ENCODE measurements at regions of chr19 and their contacts with region 1.

Region 1: GRCh38 chr19:52139252-52140031 is at the start of gene ZNF616:
- DNase-seq: peak; percentile 99
- H3K4me3 ChIP-seq: peak within 1 kb of the TSS; percentile 79 to 92 (median 86)
- H3K27ac ChIP-seq: peak within 1 kb of the TSS; percentile 94 to 97 (median 96)
- H3K4me1 ChIP-seq: peaks cover 0 to 19% (median 16%) of the 10 kb centered on the region in 4 donors
- H3K27me3 ChIP-seq: no peaks in the 10 kb centered on the region
- CTCF ChIP-seq: peak; percentile 83 to 92 (median 85)
- EP300 ChIP-seq: no peak
- POLR2A ChIP-seq: peak; percentile 61 to 83
- total RNA-seq, gene ZNF616: 4.3 to 7.2 (median 5.4) TPM

Region 2: GRCh38 chr19:52171321-52172169 is 32.1 kb after region 1 on chr19 and contains the start of gene ZNF836:
- intact Hi-C with region 1: loop called (anchors 2 kb)
- DNase-seq: peak; percentile 96
- H3K4me3 ChIP-seq: peak within 1 kb of the TSS; percentile 78 to 90 (median 88)
- H3K27ac ChIP-seq: peak within 1 kb of the TSS; percentile 87 to 90 (median 88)
- H3K4me1 ChIP-seq: peaks cover 0 to 21% (median 12%) of the 10 kb centered on the region in 4 donors
- H3K27me3 ChIP-seq: no peaks in the 10 kb centered on the region
- CTCF ChIP-seq: no peak
- EP300 ChIP-seq: no peak
- POLR2A ChIP-seq: no peak
- total RNA-seq, gene ZNF836: 9.1 to 12.3 (median 9.9) TPM

Region 3: DNA sequence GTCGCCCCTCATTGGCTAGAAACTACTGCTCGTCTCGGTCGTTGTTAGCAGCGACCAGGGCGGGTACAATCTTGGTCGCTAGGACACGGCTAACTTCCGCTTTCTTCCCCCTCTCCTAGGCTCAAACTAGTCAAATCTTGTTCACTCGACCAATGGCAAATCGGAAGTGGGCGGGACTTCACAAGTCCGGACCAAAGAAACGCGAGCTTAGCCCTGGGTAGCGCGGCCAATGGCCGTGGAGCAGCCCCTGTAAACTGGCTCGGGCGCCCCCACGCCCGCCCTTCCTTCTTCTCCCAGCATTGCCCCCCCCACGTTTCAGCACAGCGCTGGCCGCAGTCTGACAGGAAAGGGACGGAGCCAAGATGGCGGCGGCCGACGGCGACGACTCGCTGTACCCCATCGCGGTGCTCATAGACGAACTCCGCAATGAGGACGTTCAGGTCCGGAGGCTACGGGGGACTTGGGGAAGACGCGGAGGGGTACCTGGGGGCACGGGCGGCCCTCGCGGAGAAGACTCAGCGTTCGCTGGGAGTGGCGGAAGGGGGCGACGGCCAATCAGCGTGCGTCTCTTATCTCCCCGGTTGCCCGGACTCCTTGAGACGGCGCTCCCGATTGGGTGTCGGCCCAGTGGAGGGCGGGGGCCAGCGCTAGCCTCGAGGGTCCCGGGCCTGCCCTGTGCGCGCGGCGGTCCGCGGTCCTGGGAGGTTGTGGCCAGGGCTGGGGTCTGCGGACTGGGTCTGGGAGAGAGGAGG is 50.5 kb after region 1 on chr19 and contains the start of gene PPP2R1A:
- intact Hi-C with region 1: loop called (anchors 1 kb)
- DNase-seq: peak; percentile 100
- H3K4me3 ChIP-seq: peak within 1 kb of the TSS; percentile 77 to 82 (median 80)
- H3K27ac ChIP-seq: peak within 1 kb of the TSS; percentile 94 to 97 (median 95)
- H3K4me1 ChIP-seq: peaks cover 0 to 53% (median 49%) of the 10 kb centered on the region in 4 donors
- H3K27me3 ChIP-seq: no peaks in the 10 kb centered on the region
- CTCF ChIP-seq: no peak
- EP300 ChIP-seq: no peak
- POLR2A ChIP-seq: peak; percentile 94 to 97
- total RNA-seq, gene PPP2R1A: 127 to 163 (median 137) TPM

Region 4: DNA sequence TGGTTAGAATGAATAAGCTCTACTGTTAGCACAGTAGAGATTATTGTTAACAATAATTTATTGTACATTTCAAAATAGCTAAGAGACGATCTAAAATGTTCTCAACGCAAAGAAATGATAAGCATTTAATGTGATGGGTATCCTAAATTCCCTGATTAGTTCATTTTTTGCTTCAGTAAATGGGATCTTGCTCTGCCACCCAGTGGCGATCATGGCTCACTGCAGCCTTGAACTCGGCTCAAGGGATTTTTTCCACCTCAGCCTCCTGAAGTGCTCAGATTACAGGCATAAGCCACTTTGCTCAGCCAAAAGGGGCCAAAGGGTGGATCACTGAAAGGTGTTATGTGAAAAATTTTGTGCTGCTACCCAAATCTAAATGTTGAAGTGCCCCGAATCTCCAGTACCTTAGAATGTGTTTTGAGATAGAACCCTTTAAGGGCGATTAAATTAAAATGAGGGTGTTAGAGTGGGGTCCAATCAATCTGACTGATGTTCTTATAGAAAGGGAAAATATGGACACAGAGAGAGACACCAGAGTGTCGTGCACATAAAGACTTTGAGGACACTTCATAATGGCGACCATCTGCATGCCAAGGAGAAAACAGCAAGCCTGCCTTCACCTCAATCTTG is 98.4 kb after region 1 on chr19:
- intact Hi-C with region 1: loop called (anchors 1 kb)
- DNase-seq: peak; percentile 75
- H3K4me3 ChIP-seq: no peak overlapping the region
- H3K27ac ChIP-seq: no peak overlapping the region
- H3K4me1 ChIP-seq: peaks cover 0 to 4% (median 0%) of the 10 kb centered on the region in 4 donors
- H3K27me3 ChIP-seq: no peaks in the 10 kb centered on the region
- CTCF ChIP-seq: peak; percentile 76 to 90 (median 82)
- EP300 ChIP-seq: no peak
- POLR2A ChIP-seq: no peak

Region 5: GRCh38 chr19:52410821-52411220 is 271.4 kb after region 1 on chr19:
- intact Hi-C with region 1: no loop called
- DNase-seq: no peak
- H3K4me3 ChIP-seq: no peak overlapping the region
- H3K27ac ChIP-seq: no peak overlapping the region
- H3K4me1 ChIP-seq: no peaks in the 10 kb centered on the region
- H3K27me3 ChIP-seq: no peaks in the 10 kb centered on the region
- CTCF ChIP-seq: no peak
- EP300 ChIP-seq: no peak
- POLR2A ChIP-seq: no peak